Caco-2 (cell line): ENCODE measurements at regions of chr20 and their contacts with region 1.

Region 1: GRCh38 chr20:31572701-31573554 is 32.2 kb upstream of the ID1 start:
- DNase-seq: peak; percentile 100
- H3K4me3 ChIP-seq: peak overlapping the region; percentile 56
- H3K4me3 Mint-ChIP-seq: peak overlapping the region; percentile 87
- H3K27ac Mint-ChIP-seq: peak overlapping the region; percentile 98
- H3K4me1 ChIP-seq: peaks cover 24% of the 10 kb centered on the region
- H3K4me1 Mint-ChIP-seq: peaks cover 37% of the 10 kb centered on the region
- H3K27me3 ChIP-seq: no peaks in the 10 kb centered on the region
- H3K27me3 Mint-ChIP-seq: no peaks in the 10 kb centered on the region
- CTCF ChIP-seq: peak in 1 of 2 experiments; percentile 16

Region 2: GRCh38 chr20:31390490-31390889 is 182.4 kb before region 1 on chr20 and contains the start of gene DEFB119:
- CTCF ChIA-PET with region 1: no interaction called
- POLR2A ChIA-PET with region 1: no interaction called
- intact Hi-C with region 1: no loop called
- DNase-seq: no peak
- H3K4me3 ChIP-seq: no peak within 1 kb of the TSS
- H3K4me3 Mint-ChIP-seq: no peak within 1 kb of the TSS
- H3K27ac Mint-ChIP-seq: no peak within 1 kb of the TSS
- H3K4me1 ChIP-seq: no peaks in the 10 kb centered on the region
- H3K4me1 Mint-ChIP-seq: no peaks in the 10 kb centered on the region
- H3K27me3 ChIP-seq: no peaks in the 10 kb centered on the region
- H3K27me3 Mint-ChIP-seq: peaks cover 24% of the 10 kb centered on the region
- CTCF ChIP-seq: no peak
- total RNA-seq, gene DEFB119: not detected in 2 replicates

Region 3: DNA sequence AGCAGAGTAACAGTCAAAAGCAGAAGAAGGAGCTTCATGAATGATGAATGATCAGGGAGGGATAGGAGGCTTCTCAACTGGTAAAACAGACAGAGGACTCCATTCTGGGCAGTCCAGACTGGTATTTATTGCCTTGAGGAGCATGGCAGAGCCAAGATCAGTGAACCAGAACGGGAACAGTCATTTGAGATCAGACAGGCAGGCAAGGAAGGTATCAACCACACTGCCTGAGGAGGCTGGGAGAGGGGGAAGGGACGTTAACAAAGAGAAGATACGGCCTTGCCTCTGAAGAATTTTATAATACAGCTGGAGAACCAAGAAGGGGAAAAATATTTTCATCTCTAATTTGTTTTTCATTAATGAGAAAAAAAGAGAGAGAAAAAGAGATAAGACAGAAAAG is 166.8 kb before region 1 on chr20 and contains the start of gene DEFB121:
- CTCF ChIA-PET with region 1: no interaction called
- POLR2A ChIA-PET with region 1: no interaction called
- intact Hi-C with region 1: no loop called
- DNase-seq: no peak
- H3K4me3 ChIP-seq: no peak within 1 kb of the TSS
- H3K4me3 Mint-ChIP-seq: no peak within 1 kb of the TSS
- H3K27ac Mint-ChIP-seq: no peak within 1 kb of the TSS
- H3K4me1 ChIP-seq: no peaks in the 10 kb centered on the region
- H3K4me1 Mint-ChIP-seq: no peaks in the 10 kb centered on the region
- H3K27me3 ChIP-seq: no peaks in the 10 kb centered on the region; the same call in 1 of the 2 replicates
- H3K27me3 Mint-ChIP-seq: peaks cover 11% of the 10 kb centered on the region
- CTCF ChIP-seq: no peak
- total RNA-seq, gene DEFB121: not detected in 2 replicates

Region 4: DNA sequence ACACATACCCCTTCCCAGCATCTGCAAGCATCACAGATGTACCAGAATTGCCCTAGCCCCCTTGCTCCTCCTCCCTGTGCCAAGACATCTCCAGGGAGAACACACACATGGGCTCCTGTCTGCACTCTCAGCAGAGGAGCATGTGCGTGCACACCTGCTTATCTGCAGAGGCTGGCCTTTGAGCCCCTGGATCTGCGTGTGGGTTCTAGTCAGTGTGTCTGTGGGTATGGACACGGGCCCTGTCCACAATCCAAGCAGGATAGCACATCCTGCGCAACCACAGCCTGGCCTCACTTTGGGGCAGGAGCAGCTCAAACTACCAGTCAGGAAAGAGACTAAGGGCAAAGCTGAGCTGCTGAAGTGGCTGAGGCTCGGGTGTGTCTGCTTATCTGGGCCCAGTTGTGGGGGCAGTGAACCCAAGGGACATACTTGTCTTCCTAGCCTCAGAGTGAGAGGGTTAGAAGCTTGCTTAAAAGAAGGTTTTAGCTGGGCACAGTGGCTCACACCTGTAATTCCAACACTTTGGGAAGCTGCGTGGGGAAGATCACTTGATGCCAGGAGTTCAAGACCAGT is 17.6 kb before region 1 on chr20:
- CTCF ChIA-PET with region 1: interaction called, 123 read pairs
- POLR2A ChIA-PET with region 1: interaction called, 21 read pairs
- intact Hi-C with region 1: no loop called
- DNase-seq: no peak
- H3K4me3 ChIP-seq: no peak overlapping the region
- H3K4me3 Mint-ChIP-seq: no peak overlapping the region
- H3K27ac Mint-ChIP-seq: no peak overlapping the region
- H3K4me1 ChIP-seq: peaks cover 28% of the 10 kb centered on the region
- H3K4me1 Mint-ChIP-seq: peaks cover 7% of the 10 kb centered on the region
- H3K27me3 ChIP-seq: no peaks in the 10 kb centered on the region
- H3K27me3 Mint-ChIP-seq: no peaks in the 10 kb centered on the region
- CTCF ChIP-seq: no peak

Region 5: DNA sequence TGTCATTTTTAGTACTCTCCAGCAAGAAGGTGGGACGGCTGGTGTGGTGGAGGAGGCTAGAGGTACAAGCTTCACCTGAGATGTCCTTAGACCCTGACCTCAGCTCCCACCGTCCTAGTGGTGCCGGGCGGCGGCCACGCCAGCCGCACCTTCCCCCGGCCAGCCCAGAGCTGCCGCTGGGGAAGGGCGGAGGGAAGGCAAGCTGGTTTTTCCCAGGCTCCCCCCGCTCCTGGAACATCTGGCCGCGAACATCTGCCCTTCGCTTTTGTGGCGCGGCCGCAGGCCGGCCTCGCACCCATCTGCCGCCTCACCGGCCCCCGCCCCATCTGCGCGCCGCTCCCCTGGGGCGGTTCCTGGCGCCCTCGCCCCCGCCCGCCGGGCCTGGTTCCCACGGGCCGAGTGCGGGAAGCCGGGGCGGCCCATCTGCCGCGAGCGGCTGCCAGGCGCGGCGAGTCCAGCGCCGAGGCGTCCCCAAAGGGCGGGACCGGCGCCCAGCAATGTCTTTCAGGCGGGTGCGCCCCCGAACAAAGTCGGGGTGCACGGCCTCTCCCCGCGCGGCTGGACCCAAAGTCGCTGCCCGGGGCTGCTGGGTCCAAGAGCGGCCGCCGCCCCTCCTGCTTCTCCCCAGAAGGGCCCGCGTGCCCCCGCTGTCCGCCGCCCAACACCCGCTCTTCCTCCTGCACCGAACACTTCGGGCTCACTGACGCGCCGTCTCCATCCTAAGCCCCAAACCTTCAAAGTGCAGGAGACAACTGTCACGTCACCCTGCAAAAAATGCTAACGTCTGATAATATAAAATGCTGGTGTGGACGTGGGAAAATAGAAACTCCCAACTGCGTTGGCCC is 14.8 kb after region 1 on chr20:
- CTCF ChIA-PET with region 1: interaction called, 20 read pairs
- POLR2A ChIA-PET with region 1: interaction called, 20 read pairs
- intact Hi-C with region 1: loop called (anchors 2 kb)
- DNase-seq: peak in 1 of 2 experiments; percentile 68
- H3K4me3 ChIP-seq: peak overlapping the region; percentile 53
- H3K4me3 Mint-ChIP-seq: peak overlapping the region; percentile 72
- H3K27ac Mint-ChIP-seq: peak overlapping the region; percentile 78
- H3K4me1 ChIP-seq: peaks cover 23% of the 10 kb centered on the region
- H3K4me1 Mint-ChIP-seq: peaks cover 17% of the 10 kb centered on the region
- H3K27me3 ChIP-seq: no peaks in the 10 kb centered on the region
- H3K27me3 Mint-ChIP-seq: no peaks in the 10 kb centered on the region
- CTCF ChIP-seq: no peak

Region 6: DNA sequence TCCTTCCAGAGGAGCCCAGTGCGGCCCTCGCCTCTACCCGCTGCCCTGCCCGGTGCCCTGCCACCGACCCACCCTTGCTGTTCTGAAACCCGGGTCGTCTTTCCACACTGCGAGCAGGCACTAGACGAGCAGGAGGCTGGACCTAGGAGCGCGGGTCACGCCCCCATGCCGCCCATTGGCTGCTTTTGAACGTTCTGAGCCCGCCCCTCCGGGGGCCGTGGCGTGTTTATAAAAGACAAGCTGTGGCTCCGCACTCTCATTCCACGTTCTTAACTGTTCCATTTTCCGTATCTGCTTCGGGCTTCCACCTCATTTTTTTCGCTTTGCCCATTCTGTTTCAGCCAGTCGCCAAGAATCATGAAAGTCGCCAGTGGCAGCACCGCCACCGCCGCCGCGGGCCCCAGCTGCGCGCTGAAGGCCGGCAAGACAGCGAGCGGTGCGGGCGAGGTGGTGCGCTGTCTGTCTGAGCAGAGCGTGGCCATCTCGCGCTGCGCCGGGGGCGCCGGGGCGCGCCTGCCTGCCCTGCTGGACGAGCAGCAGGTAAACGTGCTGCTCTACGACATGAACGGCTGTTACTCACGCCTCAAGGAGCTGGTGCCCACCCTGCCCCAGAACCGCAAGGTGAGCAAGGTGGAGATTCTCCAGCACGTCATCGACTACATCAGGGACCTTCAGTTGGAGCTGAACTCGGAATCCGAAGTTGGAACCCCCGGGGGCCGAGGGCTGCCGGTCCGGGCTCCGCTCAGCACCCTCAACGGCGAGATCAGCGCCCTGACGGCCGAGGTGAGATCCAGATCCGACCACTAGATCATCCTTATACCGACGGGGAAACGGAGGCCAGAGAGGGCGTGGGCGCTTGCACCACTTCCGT is 32.3 kb after region 1 on chr20 and contains the start of gene ID1:
- CTCF ChIA-PET with region 1: interaction called, 1,708 read pairs
- POLR2A ChIA-PET with region 1: interaction called, 306 read pairs
- intact Hi-C with region 1: loop called (anchors 1 kb)
- DNase-seq: peak; percentile 100
- H3K4me3 ChIP-seq: peak within 1 kb of the TSS; percentile 63
- H3K4me3 Mint-ChIP-seq: peak within 1 kb of the TSS; percentile 88
- H3K27ac Mint-ChIP-seq: peak within 1 kb of the TSS; percentile 98
- H3K4me1 ChIP-seq: peaks cover 54% of the 10 kb centered on the region
- H3K4me1 Mint-ChIP-seq: peaks cover 49% of the 10 kb centered on the region
- H3K27me3 ChIP-seq: no peaks in the 10 kb centered on the region
- H3K27me3 Mint-ChIP-seq: no peaks in the 10 kb centered on the region
- CTCF ChIP-seq: no peak
- total RNA-seq, gene ID1: 157 and 163 TPM in 2 replicates

Region 7: DNA sequence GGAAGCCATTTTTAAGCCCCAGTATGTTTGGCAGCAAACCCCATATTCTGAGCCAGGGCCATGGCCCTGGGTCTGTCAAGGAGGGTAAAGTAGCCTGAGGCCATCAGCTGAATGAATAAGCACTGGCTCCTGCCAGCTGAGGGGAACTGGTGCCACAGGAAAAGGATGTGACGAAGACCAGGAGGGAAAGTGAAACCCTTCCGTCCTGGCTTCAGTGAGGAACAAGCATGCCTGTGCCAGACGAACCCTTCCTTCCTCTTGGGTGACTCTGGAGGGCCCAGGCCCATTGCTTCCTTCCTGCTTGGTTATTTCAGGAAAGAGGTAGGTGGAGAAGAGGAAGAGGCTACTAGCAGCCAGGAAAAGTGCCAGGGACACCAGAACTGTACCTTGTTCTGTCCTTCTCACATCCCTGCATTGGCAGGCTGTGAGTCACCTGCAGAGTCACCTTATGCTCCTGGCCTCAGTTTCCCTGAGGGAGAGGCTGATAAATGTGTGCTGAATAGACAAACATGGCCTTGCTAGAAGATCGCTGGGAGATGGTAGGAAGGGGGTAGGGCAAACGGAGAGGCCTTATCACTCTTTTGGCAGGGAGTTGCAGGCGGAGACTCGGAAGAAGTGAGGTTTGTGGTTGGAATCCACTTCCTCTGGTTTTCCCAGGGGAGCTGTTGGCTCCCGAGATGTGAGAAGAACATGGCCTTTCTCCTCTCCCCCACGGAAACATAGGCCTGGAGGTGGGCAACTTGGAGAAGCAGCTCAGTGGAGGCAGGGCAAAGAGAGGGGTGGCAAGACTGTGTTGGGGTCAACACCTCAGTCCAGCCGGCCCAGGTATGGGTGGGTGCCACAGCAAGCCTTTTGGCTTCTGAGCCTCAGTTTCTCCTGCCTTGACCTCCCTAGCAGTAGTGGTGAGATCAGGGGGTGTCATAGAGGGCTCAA is 102.2 kb after region 1 on chr20:
- CTCF ChIA-PET with region 1: no interaction called
- POLR2A ChIA-PET with region 1: interaction called, 11 read pairs
- intact Hi-C with region 1: no loop called
- DNase-seq: no peak
- H3K4me3 ChIP-seq: no peak overlapping the region
- H3K4me3 Mint-ChIP-seq: peak overlapping the region; percentile 26
- H3K27ac Mint-ChIP-seq: peak overlapping the region; percentile 81
- H3K4me1 ChIP-seq: peaks cover 78% of the 10 kb centered on the region
- H3K4me1 Mint-ChIP-seq: peaks cover 72% of the 10 kb centered on the region
- H3K27me3 ChIP-seq: no peaks in the 10 kb centered on the region
- H3K27me3 Mint-ChIP-seq: no peaks in the 10 kb centered on the region
- CTCF ChIP-seq: no peak

Region 8: GRCh38 chr20:31806564-31807355 is 233.8 kb after region 1 on chr20:
- CTCF ChIA-PET with region 1: no interaction called
- POLR2A ChIA-PET with region 1: interaction called, 17 read pairs
- intact Hi-C with region 1: no loop called
- DNase-seq: no peak
- H3K4me3 ChIP-seq: no peak overlapping the region
- H3K4me3 Mint-ChIP-seq: no peak overlapping the region
- H3K27ac Mint-ChIP-seq: no peak overlapping the region
- H3K4me1 ChIP-seq: no peaks in the 10 kb centered on the region
- H3K4me1 Mint-ChIP-seq: no peaks in the 10 kb centered on the region
- H3K27me3 ChIP-seq: no peaks in the 10 kb centered on the region
- H3K27me3 Mint-ChIP-seq: no peaks in the 10 kb centered on the region
- CTCF ChIP-seq: no peak

Region 9: DNA sequence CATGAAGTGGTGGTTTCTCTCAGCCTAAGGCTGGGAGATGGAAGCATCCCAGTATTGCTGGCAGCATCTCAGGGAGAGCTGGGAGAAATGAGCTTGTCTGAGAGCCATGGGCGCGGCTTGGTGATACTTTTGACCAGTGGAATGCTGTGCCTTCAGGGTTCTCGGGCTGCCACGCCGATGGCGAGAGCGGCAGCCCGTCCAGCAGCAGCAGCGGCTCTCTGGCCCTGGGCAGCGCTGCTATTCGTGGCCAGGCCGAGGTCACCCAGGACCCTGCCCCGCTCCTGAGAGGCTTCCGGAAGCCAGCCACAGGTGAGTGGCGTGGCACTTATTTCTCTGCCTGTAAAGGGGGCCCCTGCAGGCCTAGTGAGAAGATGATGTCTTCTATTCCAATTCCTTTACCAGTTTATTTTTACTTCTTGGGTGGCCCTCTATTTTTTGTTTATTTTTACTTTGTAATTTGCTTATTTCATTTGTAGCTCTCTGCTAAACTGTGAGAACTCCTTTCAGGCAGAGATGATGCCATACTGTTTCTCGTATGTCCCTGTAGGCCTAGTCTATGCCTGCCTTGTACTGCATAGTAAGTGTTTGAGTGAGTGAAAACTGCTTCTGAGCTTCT is 856.9 kb after region 1 on chr20:
- CTCF ChIA-PET with region 1: no interaction called
- POLR2A ChIA-PET with region 1: no interaction called
- intact Hi-C with region 1: no loop called
- DNase-seq: no peak
- H3K4me3 ChIP-seq: no peak overlapping the region
- H3K4me3 Mint-ChIP-seq: no peak overlapping the region
- H3K27ac Mint-ChIP-seq: no peak overlapping the region
- H3K4me1 ChIP-seq: no peaks in the 10 kb centered on the region
- H3K4me1 Mint-ChIP-seq: peaks cover 7% of the 10 kb centered on the region
- H3K27me3 ChIP-seq: no peaks in the 10 kb centered on the region
- H3K27me3 Mint-ChIP-seq: no peaks in the 10 kb centered on the region
- CTCF ChIP-seq: no peak